ENCODE measurements at regions of chr3 and their contacts with region 1.

Region 1: GRCh38 chr3:128617557-128618397 is 32.8 kb downstream of the RPN1 start:
- DNase-seq: peak; percentile 93 to 97 (median 96)
- H3K4me3 ChIP-seq: peak overlapping the region; percentile 66 to 99 (median 93)
- H3K27ac ChIP-seq: peak overlapping the region; percentile 27 to 99 (median 93)
- H3K27me3 ChIP-seq: no peaks in the 10 kb centered on the region
- CTCF ChIP-seq: peak in 55 of 56 donors; percentile 90 to 100 (median 98)

Region 2: GRCh38 chr3:128650096-128651050 is 32.6 kb after region 1 on chr3 and contains the start of gene RPN1:
- intact Hi-C with region 1: loop called (anchors 2 to 5 kb)
- DNase-seq: peak; percentile 91 to 96 (median 96)
- H3K4me3 ChIP-seq: peak within 1 kb of the TSS; percentile 66 to 100 (median 100)
- H3K27ac ChIP-seq: peak within 1 kb of the TSS; percentile 47 to 99 (median 94)
- H3K27me3 ChIP-seq: no peaks in the 10 kb centered on the region
- CTCF ChIP-seq: peak in 24 of 56 donors; percentile 5 to 46 (median 26)
- total RNA-seq, gene RPN1: 67.6 to 110 (median 88.8) TPM

Region 3: DNA sequence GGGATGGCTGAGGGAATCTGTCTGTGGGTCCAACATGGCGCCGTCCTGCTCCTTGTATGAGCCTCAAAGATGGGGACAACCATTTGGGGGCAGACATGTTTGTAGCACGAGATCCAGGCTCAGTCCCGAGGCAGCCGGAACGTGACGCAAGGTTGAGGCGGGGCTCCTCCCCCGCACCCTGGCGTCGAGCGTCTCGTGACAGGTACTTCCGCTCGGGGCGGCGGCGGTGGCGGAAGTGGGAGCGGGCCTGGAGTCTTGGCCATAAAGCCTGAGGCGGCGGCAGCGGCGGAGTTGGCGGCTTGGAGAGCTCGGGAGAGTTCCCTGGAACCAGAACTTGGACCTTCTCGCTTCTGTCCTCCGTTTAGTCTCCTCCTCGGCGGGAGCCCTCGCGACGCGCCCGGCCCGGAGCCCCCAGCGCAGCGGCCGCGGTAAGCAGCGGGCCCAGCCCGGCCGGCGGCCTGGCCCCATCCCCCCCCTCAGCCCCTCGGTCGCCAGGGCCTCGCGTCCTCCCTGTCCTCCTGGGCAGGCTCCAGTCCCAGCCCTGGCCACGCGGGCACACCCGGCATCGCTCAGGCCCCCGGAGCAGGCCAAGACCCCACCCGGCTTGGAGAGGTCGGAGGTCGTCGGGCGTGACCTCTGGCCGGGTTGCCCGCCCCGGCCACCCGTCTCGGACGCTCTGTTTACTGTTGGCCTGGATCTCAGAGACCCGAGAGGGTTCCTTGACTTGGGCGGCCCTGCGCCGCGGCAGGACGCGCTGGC is 108.3 kb after region 1 on chr3 and contains the start of gene RAB7A:
- intact Hi-C with region 1: loop called (anchors 2 to 5 kb)
- DNase-seq: peak; percentile 94 to 99 (median 98)
- H3K4me3 ChIP-seq: peak within 1 kb of the TSS; percentile 71 to 100 (median 97)
- H3K27ac ChIP-seq: peak within 1 kb of the TSS; percentile 59 to 97 (median 91)
- H3K27me3 ChIP-seq: no peaks in the 10 kb centered on the region
- CTCF ChIP-seq: peak in 50 of 56 donors; percentile 7 to 69 (median 44)
- total RNA-seq, gene RAB7A: 221 to 378 (median 299) TPM

Region 4: GRCh38 chr3:128794770-128795649 is 177.2 kb after region 1 on chr3:
- intact Hi-C with region 1: loop called (anchors 5 kb)
- DNase-seq: peak in 5 of 10 donors; percentile 38 to 52 (median 51)
- H3K4me3 ChIP-seq: peak overlapping the region in 1 of 59 donors; percentile 22
- H3K27ac ChIP-seq: peak overlapping the region in 56 of 59 donors; percentile 4 to 82 (median 49)
- H3K27me3 ChIP-seq: no peaks in the 10 kb centered on the region
- CTCF ChIP-seq: peak; percentile 57 to 91 (median 81)

Region 5: GRCh38 chr3:128845778-128846485 is 228.2 kb after region 1 on chr3:
- intact Hi-C with region 1: loop called in 1 of 2 experiments (anchors 5 kb)
- DNase-seq: peak; percentile 66 to 87 (median 82)
- H3K4me3 ChIP-seq: peak overlapping the region; percentile 30 to 72 (median 55)
- H3K27ac ChIP-seq: peak overlapping the region in 57 of 59 donors; percentile 4 to 92 (median 81)
- H3K27me3 ChIP-seq: no peaks in the 10 kb centered on the region
- CTCF ChIP-seq: peak in 54 of 56 donors; percentile 25 to 78 (median 60)

Region 6: GRCh38 chr3:128879125-128879969 is 261.6 kb after region 1 on chr3 and contains the start of gene ACAD9:
- intact Hi-C with region 1: loop called (anchors 5 kb)
- DNase-seq: peak; percentile 94 to 99 (median 97)
- H3K4me3 ChIP-seq: peak within 1 kb of the TSS; percentile 67 to 99 (median 85)
- H3K27ac ChIP-seq: peak within 1 kb of the TSS; percentile 73 to 97 (median 92)
- H3K27me3 ChIP-seq: no peaks in the 10 kb centered on the region
- CTCF ChIP-seq: peak in 40 of 56 donors; percentile 5 to 64 (median 26)
- total RNA-seq, gene ACAD9: 36.3 to 64.1 (median 51.0) TPM

Region 7: GRCh38 chr3:128932516-128933212 is 314.9 kb after region 1 on chr3:
- intact Hi-C with region 1: no loop called
- DNase-seq: no peak
- H3K4me3 ChIP-seq: no peak overlapping the region
- H3K27ac ChIP-seq: no peak overlapping the region
- H3K27me3 ChIP-seq: no peaks in the 10 kb centered on the region
- CTCF ChIP-seq: no peak